Naive thymus-derived CD4-positive, alpha-beta T cell (primary cell): ENCODE measurements at regions of chr12 and their contacts with region 1.

Region 1: DNA sequence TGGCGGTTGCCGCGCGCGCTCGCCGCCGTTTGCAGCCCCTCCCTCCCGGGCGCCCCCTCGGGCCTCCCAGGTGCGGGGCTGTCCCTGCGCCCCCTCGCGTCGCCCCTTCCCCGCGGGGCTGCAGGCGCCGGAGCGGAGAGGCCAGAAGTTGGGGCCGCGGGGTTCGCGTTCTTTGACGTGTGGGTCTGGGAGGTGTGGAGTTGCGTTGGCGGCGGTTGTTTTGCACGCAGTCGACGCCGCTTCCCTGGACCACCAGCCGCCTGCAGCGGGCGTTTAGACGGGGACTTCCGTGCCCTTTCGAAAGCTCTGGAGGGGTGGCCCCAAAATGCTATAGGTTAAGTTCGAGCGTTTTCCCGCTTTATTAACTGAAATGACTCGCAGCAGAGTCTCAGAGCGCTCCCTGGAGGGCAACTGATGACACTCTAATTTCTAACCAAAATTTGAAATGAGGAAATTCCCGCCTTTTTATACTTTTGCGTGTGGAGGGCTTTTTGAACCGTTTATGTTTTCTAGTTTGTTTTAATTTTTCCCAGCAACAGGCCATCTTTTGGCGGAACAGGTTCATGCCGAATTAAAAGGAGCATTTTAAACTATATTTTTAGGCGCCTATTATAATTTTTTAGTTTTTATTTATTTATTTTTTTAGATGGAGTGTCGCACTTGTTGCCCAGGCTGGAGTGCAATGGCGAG is 939 bp downstream of the TMPO start:
- DNase-seq: peak; percentile 53 to 90 (median 83)
- ATAC-seq: peak; percentile 79
- H3K4me3 ChIP-seq: peak overlapping the region; percentile 92
- H3K4me3 Mint-ChIP-seq: peak overlapping the region; percentile 95 to 100 (median 99)
- H3K27ac ChIP-seq: peak overlapping the region; percentile 95
- H3K27ac Mint-ChIP-seq: peak overlapping the region; percentile 91 to 99 (median 99)
- H3K4me1 ChIP-seq: peaks cover 10 to 26% of the 10 kb centered on the region in 2 donors
- H3K4me1 Mint-ChIP-seq: peaks cover 33 to 69% (median 52%) of the 10 kb centered on the region in 7 donors
- H3K27me3 ChIP-seq: no peaks in the 10 kb centered on the region
- H3K27me3 Mint-ChIP-seq: peaks cover 0 to 1% (median 0%) of the 10 kb centered on the region in 5 donors

Region 2: DNA sequence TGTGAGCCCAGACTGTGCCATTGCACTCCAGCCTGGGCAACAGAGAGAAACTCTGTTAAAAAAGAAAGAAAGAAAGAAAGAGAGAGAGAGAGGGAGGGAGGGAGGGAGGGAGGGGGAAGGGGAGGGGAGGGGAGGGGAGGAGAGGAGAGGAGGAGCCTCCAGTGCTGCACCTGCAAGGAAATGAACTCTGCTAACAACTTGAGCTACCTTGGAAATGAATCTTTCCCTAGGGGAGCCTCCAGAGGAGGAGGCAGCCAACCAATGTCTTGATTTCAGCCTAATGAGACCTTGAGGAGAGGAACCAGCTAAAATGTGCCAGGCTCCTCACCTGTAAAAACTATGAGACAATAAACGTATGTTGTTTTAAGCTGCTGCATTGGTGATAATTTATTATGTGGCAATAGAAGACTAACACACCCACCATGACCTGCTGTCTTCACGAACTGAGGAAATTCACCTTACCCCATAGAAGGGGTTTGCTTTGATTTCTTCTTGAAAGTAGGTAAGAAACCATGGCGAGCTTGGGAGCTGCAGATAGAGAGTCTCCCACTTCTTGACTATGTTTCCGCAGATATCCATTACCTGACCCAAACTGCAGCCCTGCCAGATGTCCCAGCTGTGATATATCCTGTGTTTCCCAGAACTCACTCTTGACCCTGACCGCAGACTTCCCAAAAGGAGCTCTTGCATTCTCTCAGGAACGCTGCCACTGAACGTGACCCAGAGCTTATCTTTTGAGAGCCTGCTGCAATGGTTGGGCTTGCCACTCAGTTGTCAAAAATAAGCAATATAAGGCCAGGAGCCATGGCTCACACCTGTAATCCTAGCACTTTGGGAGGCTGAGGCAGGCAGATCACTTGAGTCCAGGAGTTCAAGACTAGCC is 32.5 kb before region 1 on chr12:
- CTCF ChIA-PET with region 1: interaction called, 6 read pairs
- POLR2A ChIA-PET with region 1: interaction called, 143 read pairs
- intact Hi-C with region 1: loop called in 1 of 2 experiments (anchors 5 kb)
- DNase-seq: no peak
- ATAC-seq: no peak
- H3K4me3 ChIP-seq: no peak overlapping the region
- H3K4me3 Mint-ChIP-seq: no peak overlapping the region
- H3K27ac ChIP-seq: no peak overlapping the region
- H3K27ac Mint-ChIP-seq: no peak overlapping the region
- H3K4me1 ChIP-seq: no peaks in the 10 kb centered on the region
- H3K4me1 Mint-ChIP-seq: no peaks in the 10 kb centered on the region
- H3K27me3 ChIP-seq: no peaks in the 10 kb centered on the region
- H3K27me3 Mint-ChIP-seq: peaks cover 0 to 23% (median 2%) of the 10 kb centered on the region in 5 donors

Region 3: DNA sequence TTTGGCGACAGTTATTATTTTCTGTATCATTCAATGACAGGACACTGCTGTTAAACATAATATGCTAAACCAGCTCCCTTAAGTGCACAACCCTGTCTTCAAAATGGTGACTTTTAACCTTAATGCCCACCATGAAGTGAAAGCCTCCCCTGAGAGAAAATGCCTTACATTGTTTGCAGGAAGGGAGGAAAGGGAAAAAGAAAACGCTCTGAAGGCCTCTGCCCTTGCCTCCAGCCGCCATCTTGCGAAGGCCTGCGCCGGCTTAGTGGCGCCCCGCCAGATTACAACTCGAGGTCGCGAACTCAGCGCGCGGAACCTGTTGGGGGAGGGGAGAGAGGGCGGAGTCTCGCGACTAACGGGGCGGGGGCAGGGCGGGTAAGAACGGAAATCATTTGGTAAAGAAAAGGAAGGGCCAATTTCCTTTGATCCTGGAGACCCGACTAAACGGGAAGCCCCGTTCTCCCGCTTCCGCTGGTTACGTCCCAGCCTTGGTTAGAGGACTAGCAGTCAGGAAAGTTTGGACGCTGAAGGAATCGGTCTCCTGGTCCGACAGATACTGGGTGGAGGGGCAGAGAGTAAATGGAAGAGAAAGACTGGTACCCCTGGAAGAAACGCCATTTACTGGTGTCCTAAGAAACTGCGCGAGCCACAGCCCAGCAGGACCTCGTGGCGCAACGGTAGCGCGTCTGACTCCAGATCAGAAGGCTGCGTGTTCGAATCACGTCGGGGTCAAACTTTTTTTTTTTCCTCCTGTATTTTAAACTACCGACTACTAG is 12.5 kb before region 1 on chr12:
- CTCF ChIA-PET with region 1: interaction called, 6 read pairs
- POLR2A ChIA-PET with region 1: interaction called, 103 read pairs
- intact Hi-C with region 1: loop called (anchors 1 kb)
- DNase-seq: peak; percentile 89 to 95 (median 92)
- ATAC-seq: peak; percentile 94
- H3K4me3 ChIP-seq: peak overlapping the region; percentile 97
- H3K4me3 Mint-ChIP-seq: peak overlapping the region; percentile 89 to 99 (median 94)
- H3K27ac ChIP-seq: peak overlapping the region; percentile 90
- H3K27ac Mint-ChIP-seq: peak overlapping the region; percentile 95 to 100 (median 100)
- H3K4me1 ChIP-seq: peaks cover 0 to 11% of the 10 kb centered on the region in 2 donors
- H3K4me1 Mint-ChIP-seq: peaks cover 6 to 30% (median 23%) of the 10 kb centered on the region in 7 donors
- H3K27me3 ChIP-seq: no peaks in the 10 kb centered on the region
- H3K27me3 Mint-ChIP-seq: peaks cover 0 to 18% (median 3%) of the 10 kb centered on the region in 5 donors

Region 4: GRCh38 chr12:98644711-98645402 is 128.5 kb after region 1 on chr12 and contains the starts of genes APAF1 and IKBIP:
- CTCF ChIA-PET with region 1: no interaction called
- POLR2A ChIA-PET with region 1: interaction called, 9 read pairs
- intact Hi-C with region 1: loop called (anchors 1 kb)
- DNase-seq: peak; percentile 92 to 98 (median 96)
- ATAC-seq: peak; percentile 96
- H3K4me3 ChIP-seq: peak within 1 kb of the TSS; percentile 72
- H3K4me3 Mint-ChIP-seq: peak within 1 kb of the TSS; percentile 94 to 100 (median 98)
- H3K27ac ChIP-seq: peak within 1 kb of the TSS; percentile 76
- H3K27ac Mint-ChIP-seq: peak within 1 kb of the TSS; percentile 84 to 97 (median 93)
- H3K4me1 ChIP-seq: peaks cover 0 to 8% of the 10 kb centered on the region in 2 donors
- H3K4me1 Mint-ChIP-seq: peaks cover 7 to 40% (median 27%) of the 10 kb centered on the region in 7 donors
- H3K27me3 ChIP-seq: no peaks in the 10 kb centered on the region
- H3K27me3 Mint-ChIP-seq: no peaks in the 10 kb centered on the region
- total RNA-seq, gene APAF1: 22.8 to 36.4 (median 28.6) TPM
- total RNA-seq, gene IKBIP: 2.3 to 24.6 (median 6.1) TPM

Region 5: DNA sequence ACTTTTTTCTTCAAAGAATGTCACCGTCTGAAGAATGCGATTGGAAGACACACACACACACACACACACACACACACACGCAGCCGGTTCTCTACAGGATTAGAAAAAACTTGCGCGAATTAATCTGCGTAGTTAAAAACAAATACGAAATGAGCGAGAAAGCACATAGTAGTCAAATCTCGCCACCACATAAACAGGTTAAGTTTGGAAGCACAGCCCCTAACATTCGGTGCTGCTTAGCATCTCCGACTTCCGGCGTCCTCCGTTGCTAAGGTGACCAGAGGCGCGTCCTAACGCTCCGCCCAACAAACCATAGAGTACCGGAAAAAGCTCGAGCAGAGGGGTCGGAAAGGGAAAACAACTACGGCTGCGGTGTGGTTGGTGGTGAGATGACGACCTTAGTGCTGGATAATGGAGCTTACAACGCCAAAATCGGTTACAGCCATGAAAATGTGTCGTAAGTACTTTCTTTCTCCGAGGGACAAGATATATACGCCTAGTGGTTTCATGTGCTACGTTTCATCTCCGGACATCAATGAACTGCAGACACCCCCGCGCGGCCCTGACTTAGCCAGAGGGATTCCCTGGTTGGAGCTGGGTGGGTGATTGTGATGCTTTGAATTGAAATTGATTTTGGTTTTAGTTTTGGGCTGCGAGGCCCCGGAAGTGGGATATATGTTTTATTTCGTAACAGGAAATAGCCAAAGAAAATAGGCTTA is 1684.3 kb after region 1 on chr12 and contains the start of gene ACTR6:
- CTCF ChIA-PET with region 1: no interaction called
- POLR2A ChIA-PET with region 1: no interaction called
- intact Hi-C with region 1: loop called (anchors 5 to 10 kb)
- DNase-seq: peak; percentile 91 to 99 (median 97)
- ATAC-seq: peak; percentile 93
- H3K4me3 ChIP-seq: peak within 1 kb of the TSS; percentile 84
- H3K4me3 Mint-ChIP-seq: peak within 1 kb of the TSS; percentile 95 to 99 (median 98)
- H3K27ac ChIP-seq: peak within 1 kb of the TSS; percentile 95
- H3K27ac Mint-ChIP-seq: peak within 1 kb of the TSS; percentile 98 to 100 (median 99)
- H3K4me1 ChIP-seq: peaks cover 10 to 27% of the 10 kb centered on the region in 2 donors
- H3K4me1 Mint-ChIP-seq: peaks cover 17 to 56% (median 44%) of the 10 kb centered on the region in 7 donors
- H3K27me3 ChIP-seq: no peaks in the 10 kb centered on the region
- H3K27me3 Mint-ChIP-seq: no peaks in the 10 kb centered on the region
- total RNA-seq, gene ACTR6: 24.1 to 46.8 (median 34.6) TPM